Endothelial cell of umbilical vein (primary cell): ENCODE measurements at regions of chr16 and their contacts with region 1.

Region 1: GRCh38 chr16:49921791-49922456 is 66.0 kb upstream of the ZNF423 start:
- DNase-seq: peak; percentile 52
- H3K4me3 ChIP-seq: no peak overlapping the region
- H3K27ac ChIP-seq: no peak overlapping the region
- H3K4me1 ChIP-seq: no peaks in the 10 kb centered on the region
- H3K27me3 ChIP-seq: no peaks in the 10 kb centered on the region
- CTCF ChIP-seq: peak; percentile 46 to 72
- POLR2A ChIP-seq: no peak

Region 2: GRCh38 chr16:48687421-48688038 is 1234.4 kb before region 1 on chr16:
- CTCF ChIA-PET with region 1: interaction called, 3 read pairs
- POLR2A ChIA-PET with region 1: no interaction called
- dilution Hi-C with region 1: no loop called
- intact Hi-C with region 1: loop called (anchors 5 kb)
- DNase-seq: peak; percentile 59
- H3K4me3 ChIP-seq: no peak overlapping the region
- H3K27ac ChIP-seq: no peak overlapping the region
- H3K4me1 ChIP-seq: no peaks in the 10 kb centered on the region
- H3K27me3 ChIP-seq: no peaks in the 10 kb centered on the region
- CTCF ChIP-seq: peak; percentile 64
- POLR2A ChIP-seq: no peak

Region 3: DNA sequence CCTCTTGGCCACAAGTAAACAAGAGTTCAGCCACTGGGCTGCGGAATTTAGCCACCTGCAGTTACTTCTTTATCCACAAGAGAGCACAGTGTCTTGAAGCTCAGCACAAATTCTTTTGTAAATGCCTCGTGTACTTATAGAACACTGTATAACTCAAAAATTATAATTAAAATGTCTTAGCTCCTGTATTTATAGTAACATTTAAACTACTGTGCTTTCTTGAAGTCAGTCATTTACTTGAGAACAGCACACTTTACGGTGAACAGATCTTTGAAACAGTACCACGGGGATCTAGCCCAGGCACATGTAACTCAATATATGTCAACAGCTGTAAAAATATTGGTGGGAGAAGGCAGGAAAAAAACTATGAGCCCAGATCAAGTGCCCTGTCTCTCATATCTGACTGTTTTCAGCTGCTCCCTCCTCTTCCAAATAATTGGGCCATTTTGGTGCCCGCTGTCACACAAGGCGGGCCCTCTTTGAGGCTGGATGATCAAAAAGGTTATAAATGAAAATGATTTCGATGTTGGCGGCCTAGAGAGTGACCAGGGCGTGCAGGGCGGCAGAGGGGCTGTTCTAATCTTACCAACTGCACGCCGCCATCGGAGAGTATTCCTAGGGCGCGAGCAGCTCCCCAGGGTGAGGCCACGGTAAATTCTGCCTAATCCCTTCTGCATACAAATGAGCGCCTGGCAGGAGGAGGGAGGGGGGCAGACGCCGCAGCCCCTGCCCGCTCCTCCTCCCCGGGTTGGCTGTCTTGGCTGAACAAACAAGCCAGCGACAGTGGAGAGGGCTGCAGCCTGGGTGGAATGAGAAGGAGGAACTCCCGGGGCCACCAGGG is 365.1 kb before region 1 on chr16:
- CTCF ChIA-PET with region 1: interaction called, 9 read pairs
- POLR2A ChIA-PET with region 1: no interaction called
- dilution Hi-C with region 1: no loop called
- intact Hi-C with region 1: loop called (anchors 5 kb)
- DNase-seq: peak; percentile 47
- H3K4me3 ChIP-seq: no peak overlapping the region
- H3K27ac ChIP-seq: no peak overlapping the region
- H3K4me1 ChIP-seq: no peaks in the 10 kb centered on the region
- H3K27me3 ChIP-seq: no peaks in the 10 kb centered on the region
- CTCF ChIP-seq: peak; percentile 24 to 47
- POLR2A ChIP-seq: no peak

Region 4: DNA sequence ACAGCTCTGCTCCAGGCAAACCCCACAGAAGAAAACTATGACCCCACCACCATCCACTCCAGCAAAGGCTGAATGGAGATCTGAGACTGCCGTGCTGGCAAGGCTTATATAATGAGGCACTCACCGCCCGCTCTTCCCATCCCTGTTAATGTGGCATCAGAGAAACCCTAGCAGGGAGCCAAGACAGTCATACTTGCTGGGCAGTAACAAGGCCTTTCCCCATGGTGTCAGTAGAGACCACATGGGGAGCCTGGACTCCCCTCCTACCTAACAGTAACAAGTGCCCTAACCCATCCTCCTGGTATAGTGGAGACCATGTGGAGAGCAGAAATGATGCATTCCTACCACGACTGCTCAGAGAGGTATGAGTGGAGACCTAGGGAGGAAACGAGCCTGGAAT is 313.1 kb before region 1 on chr16:
- CTCF ChIA-PET with region 1: interaction called, 8 read pairs
- POLR2A ChIA-PET with region 1: no interaction called
- dilution Hi-C with region 1: no loop called
- intact Hi-C with region 1: loop called (anchors 2 kb)
- DNase-seq: peak; percentile 38
- H3K4me3 ChIP-seq: no peak overlapping the region
- H3K27ac ChIP-seq: no peak overlapping the region
- H3K4me1 ChIP-seq: peaks cover 10% of the 10 kb centered on the region
- H3K27me3 ChIP-seq: no peaks in the 10 kb centered on the region
- CTCF ChIP-seq: peak; percentile 25 to 49
- POLR2A ChIP-seq: no peak

Region 5: GRCh38 chr16:49631187-49632041 is 290.5 kb before region 1 on chr16:
- CTCF ChIA-PET with region 1: no interaction called
- POLR2A ChIA-PET with region 1: no interaction called
- dilution Hi-C with region 1: no loop called
- intact Hi-C with region 1: no loop called
- DNase-seq: peak; percentile 19
- H3K4me3 ChIP-seq: no peak overlapping the region
- H3K27ac ChIP-seq: no peak overlapping the region
- H3K4me1 ChIP-seq: no peaks in the 10 kb centered on the region
- H3K27me3 ChIP-seq: no peaks in the 10 kb centered on the region
- CTCF ChIP-seq: no peak
- POLR2A ChIP-seq: no peak

Region 6: GRCh38 chr16:49932946-49933345 is 11.0 kb after region 1 on chr16:
- CTCF ChIA-PET with region 1: no interaction called
- POLR2A ChIA-PET with region 1: no interaction called
- dilution Hi-C with region 1: no loop called
- intact Hi-C with region 1: no loop called
- DNase-seq: no peak
- H3K4me3 ChIP-seq: no peak overlapping the region
- H3K27ac ChIP-seq: no peak overlapping the region
- H3K4me1 ChIP-seq: no peaks in the 10 kb centered on the region
- H3K27me3 ChIP-seq: no peaks in the 10 kb centered on the region
- CTCF ChIP-seq: no peak
- POLR2A ChIP-seq: no peak